Activated B cell treated with CpG ODN at 0.5 μM for 24 hours (primary cell): ENCODE measurements at regions of chr22 and their contacts with region 1.

Region 1: GRCh38 chr22:41127451-41127850 is 35.1 kb downstream of the EP300 start:
- DNase-seq: no peak
- ATAC-seq: no peak
- H3K4me3 Mint-ChIP-seq: no peak overlapping the region
- H3K27ac Mint-ChIP-seq: no peak overlapping the region
- H3K4me1 Mint-ChIP-seq: peaks cover 13% of the 10 kb centered on the region
- H3K27me3 Mint-ChIP-seq: no peaks in the 10 kb centered on the region
- CTCF ChIP-seq: no peak

Region 2: GRCh38 chr22:40890881-40891280 is 236.6 kb before region 1 on chr22:
- CTCF ChIA-PET with region 1: no interaction called
- POLR2A ChIA-PET with region 1: interaction called, 12 read pairs
- intact Hi-C with region 1: no loop called
- DNase-seq: no peak
- ATAC-seq: no peak
- H3K4me3 Mint-ChIP-seq: no peak overlapping the region
- H3K27ac Mint-ChIP-seq: no peak overlapping the region
- H3K4me1 Mint-ChIP-seq: no peaks in the 10 kb centered on the region
- H3K27me3 Mint-ChIP-seq: no peaks in the 10 kb centered on the region
- CTCF ChIP-seq: no peak